Activated CD4-positive, alpha-beta memory T cell treated with anti-CD3 and anti-CD28 coated beads, Interleukin-2, amount 10 ng/mL, durations not matched to agents 7 days and 5 days (primary cell): ENCODE measurements at regions of chr10 and their contacts with region 1.

Region 1: GRCh38 chr10:110671788-110672579 is 27.8 kb downstream of the RBM20 start:
- DNase-seq: peak; percentile 71
- H3K4me3 Mint-ChIP-seq: peak overlapping the region; percentile 74
- H3K27ac Mint-ChIP-seq: no peak overlapping the region
- H3K4me1 Mint-ChIP-seq: peaks cover 5% of the 10 kb centered on the region
- H3K27me3 Mint-ChIP-seq: peaks cover 25% of the 10 kb centered on the region

Region 2: DNA sequence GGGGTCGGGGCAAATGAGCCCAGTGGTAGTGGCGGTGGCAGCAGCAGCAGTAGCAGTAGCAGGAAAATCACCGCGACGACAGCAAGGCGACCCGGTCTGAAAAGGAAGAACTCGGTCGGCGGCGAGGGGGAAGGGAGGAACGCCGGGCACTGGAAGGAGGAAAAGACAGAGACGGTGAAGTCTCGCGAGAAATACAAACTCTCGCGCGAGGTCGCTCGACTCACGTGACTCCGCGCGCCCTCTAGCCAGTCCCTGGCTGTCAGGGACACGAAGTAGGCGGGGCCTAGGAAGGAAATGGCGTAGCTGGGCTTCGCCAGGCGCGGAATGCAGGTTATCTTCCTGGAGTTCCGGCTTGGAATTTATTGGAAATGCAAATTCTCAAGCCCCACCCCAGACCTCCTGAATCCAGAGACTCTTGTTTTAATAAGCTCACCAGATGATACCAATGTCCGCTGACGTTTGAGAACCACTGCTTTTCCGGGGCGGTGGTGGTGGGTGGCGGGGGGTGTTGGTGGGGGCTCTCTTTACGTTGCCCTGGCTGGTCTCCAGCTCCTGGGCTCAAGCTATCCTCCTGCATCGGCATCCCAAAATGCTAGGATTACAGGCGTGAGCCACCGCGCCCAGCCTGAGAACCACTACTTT is 367.1 kb before region 1 on chr10 and contains the start of gene SMNDC1:
- CTCF ChIA-PET with region 1: interaction called, 26 read pairs
- POLR2A ChIA-PET with region 1: interaction called, 4 read pairs
- DNase-seq: peak; percentile 98
- H3K4me3 Mint-ChIP-seq: peak within 1 kb of the TSS; percentile 97
- H3K27ac Mint-ChIP-seq: peak within 1 kb of the TSS; percentile 96
- H3K4me1 Mint-ChIP-seq: peaks cover 55% of the 10 kb centered on the region
- H3K27me3 Mint-ChIP-seq: no peaks in the 10 kb centered on the region
- total RNA-seq, gene SMNDC1: 40.8 to 45.6 TPM

Region 3: DNA sequence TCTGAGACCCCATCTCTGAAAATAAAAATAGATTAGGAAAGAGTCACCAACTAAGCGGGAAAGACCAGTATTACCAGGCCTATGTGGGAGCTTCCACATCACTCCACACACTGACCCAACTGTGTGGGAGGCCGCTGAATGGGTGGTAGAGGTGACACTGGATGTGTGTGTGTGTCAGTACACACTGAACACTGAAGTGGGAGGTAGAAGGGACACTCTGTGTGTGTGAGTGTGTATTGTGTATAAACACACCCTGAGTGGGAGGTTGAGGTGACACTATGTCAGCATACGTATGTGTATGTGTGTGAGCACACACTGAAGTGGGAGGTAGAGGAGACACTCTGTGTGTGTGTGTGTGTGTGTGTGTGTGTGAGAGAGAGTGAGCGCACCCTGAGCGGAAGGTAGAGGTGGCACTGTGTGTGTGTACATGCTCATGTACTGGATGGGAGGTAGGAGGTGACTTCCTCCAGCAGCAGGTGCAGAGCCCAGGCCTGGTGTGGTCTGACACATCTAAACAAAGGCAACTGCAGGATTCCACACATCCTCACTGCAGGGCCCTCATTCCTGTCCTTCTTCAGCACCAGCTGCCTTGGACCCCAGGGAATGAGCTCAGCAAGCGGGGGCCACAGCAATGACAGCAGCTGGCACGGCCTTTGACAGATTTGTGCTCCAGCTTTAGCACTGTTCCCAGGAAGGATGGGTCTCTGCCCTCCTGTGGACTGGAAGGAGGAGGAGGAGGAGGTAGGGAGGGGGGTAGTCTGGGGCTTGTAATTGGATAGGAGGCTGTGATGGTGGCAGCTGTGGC is 54.4 kb before region 1 on chr10:
- CTCF ChIA-PET with region 1: interaction called, 19 read pairs
- POLR2A ChIA-PET with region 1: interaction called, 3 read pairs
- DNase-seq: no peak
- H3K4me3 Mint-ChIP-seq: no peak overlapping the region
- H3K27ac Mint-ChIP-seq: no peak overlapping the region
- H3K4me1 Mint-ChIP-seq: peaks cover 30% of the 10 kb centered on the region
- H3K27me3 Mint-ChIP-seq: peaks cover 7% of the 10 kb centered on the region

Region 4: GRCh38 chr10:110657968-110658691 is 13.9 kb before region 1 on chr10:
- CTCF ChIA-PET with region 1: interaction called, 21 read pairs
- POLR2A ChIA-PET with region 1: no interaction called
- DNase-seq: no peak
- H3K4me3 Mint-ChIP-seq: no peak overlapping the region
- H3K27ac Mint-ChIP-seq: no peak overlapping the region
- H3K4me1 Mint-ChIP-seq: peaks cover 10% of the 10 kb centered on the region
- H3K27me3 Mint-ChIP-seq: peaks cover 24% of the 10 kb centered on the region

Region 5: GRCh38 chr10:110746254-110746826 is 74.4 kb after region 1 on chr10:
- CTCF ChIA-PET with region 1: interaction called, 10 read pairs
- POLR2A ChIA-PET with region 1: no interaction called
- DNase-seq: peak; percentile 51
- H3K4me3 Mint-ChIP-seq: no peak overlapping the region
- H3K27ac Mint-ChIP-seq: no peak overlapping the region
- H3K4me1 Mint-ChIP-seq: peaks cover 36% of the 10 kb centered on the region
- H3K27me3 Mint-ChIP-seq: no peaks in the 10 kb centered on the region

Region 6: DNA sequence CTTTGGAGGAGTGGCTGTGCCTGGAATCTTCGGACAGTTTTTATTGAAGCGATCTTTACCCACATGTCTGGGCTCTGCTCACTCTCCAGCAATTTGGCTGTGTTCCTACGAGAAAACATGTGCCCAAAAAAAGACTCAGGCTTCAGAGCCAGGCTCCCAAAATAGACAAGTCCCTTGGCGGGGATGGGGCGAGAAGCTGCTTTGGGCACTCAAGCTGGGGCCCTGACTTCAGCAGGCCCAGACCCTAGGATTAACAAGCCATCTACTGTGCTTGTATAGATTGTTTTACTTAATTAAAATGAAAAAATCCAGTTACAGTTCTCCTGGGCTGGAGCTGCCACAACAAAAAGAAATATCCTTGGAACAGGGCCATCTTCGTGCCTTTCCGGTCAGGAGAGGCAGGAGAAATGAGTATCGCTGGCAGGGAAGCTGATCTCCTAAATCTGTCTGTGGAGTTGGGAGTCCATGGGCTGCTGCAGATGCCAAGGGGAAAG is 148.4 kb after region 1 on chr10:
- CTCF ChIA-PET with region 1: no interaction called
- POLR2A ChIA-PET with region 1: no interaction called
- DNase-seq: no peak
- H3K4me3 Mint-ChIP-seq: no peak overlapping the region
- H3K27ac Mint-ChIP-seq: no peak overlapping the region
- H3K4me1 Mint-ChIP-seq: peaks cover 6% of the 10 kb centered on the region
- H3K27me3 Mint-ChIP-seq: no peaks in the 10 kb centered on the region